B cell (primary cell): ENCODE measurements at regions of chr6 and their contacts with region 1.

Region 1: DNA sequence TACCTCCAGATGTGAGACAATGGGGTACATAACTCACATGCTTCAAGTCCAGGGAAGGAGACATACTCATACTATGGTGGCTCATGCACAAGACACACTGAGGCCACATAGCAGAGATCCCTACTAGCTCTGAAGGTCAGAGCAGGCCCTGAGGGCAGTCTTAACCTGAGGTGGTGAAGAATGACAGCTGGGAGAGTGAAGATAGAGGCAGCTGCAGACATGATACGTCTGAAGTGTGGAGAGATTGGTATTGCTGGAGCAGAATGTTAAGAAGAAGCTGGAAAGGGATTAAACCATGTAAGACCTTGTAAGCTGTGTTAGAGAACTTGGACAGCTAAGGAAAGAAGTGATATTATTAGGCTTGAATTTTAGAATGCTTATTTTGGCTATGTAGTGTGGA is 32.9 kb downstream of the PGM3 start:
- DNase-seq: no peak
- ATAC-seq: no peak
- H3K4me3 ChIP-seq: no peak overlapping the region
- H3K4me3 Mint-ChIP-seq: no peak overlapping the region
- H3K27ac ChIP-seq: no peak overlapping the region
- H3K27ac Mint-ChIP-seq: no peak overlapping the region
- H3K4me1 ChIP-seq: no peaks in the 10 kb centered on the region
- H3K4me1 Mint-ChIP-seq: no peaks in the 10 kb centered on the region
- H3K27me3 ChIP-seq: no peaks in the 10 kb centered on the region
- H3K27me3 Mint-ChIP-seq: no peaks in the 10 kb centered on the region
- CTCF ChIP-seq: no peak

Region 2: DNA sequence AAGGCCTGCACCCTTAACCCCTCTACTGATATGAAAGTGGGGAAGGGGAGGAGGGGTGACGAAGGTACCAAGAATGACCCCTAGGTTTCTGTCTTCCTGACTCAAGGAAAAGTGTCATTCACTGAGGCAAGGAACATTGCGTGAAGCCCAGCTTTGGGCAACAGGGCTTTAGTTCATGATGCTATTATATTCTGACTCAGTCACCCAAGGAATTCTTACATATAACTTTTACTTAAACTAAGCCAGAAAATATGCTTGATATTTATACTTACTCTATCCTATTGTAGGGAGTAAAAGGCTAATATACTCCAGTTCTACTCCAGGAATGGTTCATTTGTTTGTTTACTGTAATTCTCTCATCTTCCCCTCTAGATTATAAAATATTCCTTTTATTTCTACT is 32.2 kb before region 1 on chr6:
- CTCF ChIA-PET with region 1: no interaction called
- POLR2A ChIA-PET with region 1: no interaction called
- intact Hi-C with region 1: loop called (anchors 5 kb)
- DNase-seq: no peak
- ATAC-seq: no peak
- H3K4me3 ChIP-seq: no peak overlapping the region
- H3K4me3 Mint-ChIP-seq: no peak overlapping the region
- H3K27ac ChIP-seq: no peak overlapping the region
- H3K27ac Mint-ChIP-seq: no peak overlapping the region
- H3K4me1 ChIP-seq: no peaks in the 10 kb centered on the region
- H3K4me1 Mint-ChIP-seq: no peaks in the 10 kb centered on the region
- H3K27me3 ChIP-seq: no peaks in the 10 kb centered on the region
- H3K27me3 Mint-ChIP-seq: no peaks in the 10 kb centered on the region
- CTCF ChIP-seq: no peak